Left lung (tissue), 14 donors: ENCODE measurements at regions of chr10 and their contacts with region 1.

Region 1: GRCh38 chr10:30591249-30591670 is 38.3 kb downstream of the LYZL2 start:
- DNase-seq: peak in 2 of 4 donors; percentile 50 to 73
- ATAC-seq: peak; percentile 88
- H3K4me3 ChIP-seq: no peak overlapping the region
- H3K27ac ChIP-seq: no peak overlapping the region
- H3K4me1 ChIP-seq: peaks cover 0 to 36% of the 10 kb centered on the region in 2 donors
- H3K27me3 ChIP-seq: no peaks in the 10 kb centered on the region
- CTCF ChIP-seq: peak; percentile 66 to 81

Region 2: GRCh38 chr10:30392564-30392990 is 198.7 kb before region 1 on chr10:
- intact Hi-C with region 1: loop called in 1 of 2 experiments (anchors 5 kb)
- DNase-seq: peak; percentile 62 to 92 (median 77)
- ATAC-seq: peak; percentile 100
- H3K4me3 ChIP-seq: no peak overlapping the region
- H3K27ac ChIP-seq: no peak overlapping the region
- H3K4me1 ChIP-seq: peaks cover 0 to 16% of the 10 kb centered on the region in 2 donors
- H3K27me3 ChIP-seq: no peaks in the 10 kb centered on the region
- CTCF ChIP-seq: peak; percentile 89 to 92